Heart right ventricle (tissue), 16 donors: ENCODE measurements at regions of chr11 and their contacts with region 1.

Region 1: DNA sequence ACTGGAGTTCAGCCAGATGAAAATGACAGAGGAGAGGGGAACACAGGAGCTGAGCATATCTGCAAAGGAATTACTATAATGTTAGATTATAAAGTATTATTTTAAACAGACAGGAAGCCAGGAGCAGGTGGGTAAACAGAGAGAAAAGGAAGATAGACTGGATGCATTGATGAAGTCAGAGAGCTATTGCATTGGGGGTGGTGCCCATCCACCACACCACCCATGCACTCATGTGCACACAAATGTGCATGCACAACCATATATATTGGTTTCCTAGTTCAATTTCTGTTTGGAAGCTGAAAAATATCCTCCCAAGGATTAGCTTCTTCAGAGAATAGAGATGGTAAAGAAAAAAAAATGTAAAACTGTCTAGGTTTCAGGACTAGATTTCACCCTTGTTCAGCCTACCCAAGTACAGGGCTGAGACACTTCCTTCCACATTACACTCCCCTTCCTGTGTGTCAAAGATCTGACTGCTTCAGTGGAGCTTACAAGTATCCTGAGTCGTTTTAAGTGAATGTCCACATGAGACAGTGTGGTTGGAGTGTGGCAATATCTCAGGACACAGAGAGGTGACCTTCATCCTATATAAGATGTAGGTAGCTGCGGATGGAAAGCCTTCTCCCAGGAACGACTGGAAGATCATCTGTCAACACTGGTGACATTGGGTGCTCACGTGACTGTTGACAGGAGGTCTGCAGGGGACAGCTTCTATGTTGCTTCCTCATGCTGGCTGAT is 12.2 kb upstream of the SMPD1 start:
- DNase-seq: no peak
- ATAC-seq: peak; percentile 15 to 86 (median 76)
- H3K4me3 ChIP-seq: no peak overlapping the region
- H3K27ac ChIP-seq: peak overlapping the region in 8 of 10 donors; percentile 3 to 74 (median 52)
- H3K4me1 ChIP-seq: peaks cover 0 to 23% (median 13%) of the 10 kb centered on the region in 9 donors
- H3K27me3 ChIP-seq: no peaks in the 10 kb centered on the region
- CTCF ChIP-seq: no peak

Region 2: DNA sequence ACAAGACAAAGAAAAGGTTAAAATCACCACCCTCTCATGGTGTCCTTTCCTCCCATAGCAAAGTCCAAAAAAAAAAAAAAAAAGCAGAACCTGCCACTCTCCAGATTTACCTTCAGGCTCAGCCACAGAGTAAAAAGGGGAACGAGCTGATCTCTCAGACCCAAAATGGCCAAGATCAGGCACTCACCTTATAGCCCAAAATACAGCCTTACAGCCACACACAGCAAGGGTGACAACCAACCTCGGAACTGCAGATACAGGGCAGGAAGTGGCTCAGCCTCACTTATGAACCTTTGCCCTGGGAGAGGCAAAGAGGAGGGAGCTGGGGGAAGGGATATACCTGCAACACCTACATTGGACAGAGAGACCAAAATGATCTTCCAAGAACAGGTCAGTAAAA is 148.2 kb before region 1 on chr11:
- intact Hi-C with region 1: no loop called
- DNase-seq: no peak
- ATAC-seq: no peak
- H3K4me3 ChIP-seq: no peak overlapping the region
- H3K27ac ChIP-seq: no peak overlapping the region
- H3K4me1 ChIP-seq: peaks cover 3 to 62% (median 32%) of the 10 kb centered on the region in 9 donors
- H3K27me3 ChIP-seq: no peaks in the 10 kb centered on the region
- CTCF ChIP-seq: no peak

Region 3: GRCh38 chr11:6419009-6419631 is 41.0 kb after region 1 on chr11 and contains the start of gene APBB1:
- intact Hi-C with region 1: loop called in 1 of 10 experiments (anchors 5 kb)
- DNase-seq: peak; percentile 63 to 77
- ATAC-seq: peak; percentile 86 to 96 (median 95)
- H3K4me3 ChIP-seq: peak within 1 kb of the TSS; percentile 84 to 100 (median 98)
- H3K27ac ChIP-seq: peak within 1 kb of the TSS; percentile 79 to 99 (median 96)
- H3K4me1 ChIP-seq: peaks cover 4 to 41% (median 18%) of the 10 kb centered on the region in 9 donors
- H3K27me3 ChIP-seq: peaks cover 0 to 22% (median 0%) of the 10 kb centered on the region in 7 donors
- CTCF ChIP-seq: peak in 5 of 9 donors; percentile 9 to 39 (median 31)
- total RNA-seq, gene APBB1: 54.3 to 93.3 (median 65.2) TPM

Region 4: GRCh38 chr11:6443269-6444003 is 65.4 kb after region 1 on chr11:
- intact Hi-C with region 1: loop called (anchors 1 to 5 kb)
- DNase-seq: peak; percentile 40 to 48
- ATAC-seq: peak; percentile 52 to 84 (median 78)
- H3K4me3 ChIP-seq: no peak overlapping the region
- H3K27ac ChIP-seq: no peak overlapping the region
- H3K4me1 ChIP-seq: peaks cover 0 to 9% (median 0%) of the 10 kb centered on the region in 9 donors
- H3K27me3 ChIP-seq: no peaks in the 10 kb centered on the region
- CTCF ChIP-seq: peak; percentile 54 to 87 (median 82)

Region 5: GRCh38 chr11:6505577-6506240 is 127.6 kb after region 1 on chr11:
- intact Hi-C with region 1: loop called in 9 of 10 experiments (anchors 1 to 5 kb)
- DNase-seq: peak in 1 of 2 donors; percentile 14
- ATAC-seq: peak in 5 of 8 donors; percentile 51 to 73 (median 61)
- H3K4me3 ChIP-seq: no peak overlapping the region
- H3K27ac ChIP-seq: no peak overlapping the region
- H3K4me1 ChIP-seq: no peaks in the 10 kb centered on the region
- H3K27me3 ChIP-seq: no peaks in the 10 kb centered on the region
- CTCF ChIP-seq: peak; percentile 51 to 84 (median 75)